Heart left ventricle (tissue), 16 donors: ENCODE measurements at regions of chr20 and their contacts with region 1.

Region 1: DNA sequence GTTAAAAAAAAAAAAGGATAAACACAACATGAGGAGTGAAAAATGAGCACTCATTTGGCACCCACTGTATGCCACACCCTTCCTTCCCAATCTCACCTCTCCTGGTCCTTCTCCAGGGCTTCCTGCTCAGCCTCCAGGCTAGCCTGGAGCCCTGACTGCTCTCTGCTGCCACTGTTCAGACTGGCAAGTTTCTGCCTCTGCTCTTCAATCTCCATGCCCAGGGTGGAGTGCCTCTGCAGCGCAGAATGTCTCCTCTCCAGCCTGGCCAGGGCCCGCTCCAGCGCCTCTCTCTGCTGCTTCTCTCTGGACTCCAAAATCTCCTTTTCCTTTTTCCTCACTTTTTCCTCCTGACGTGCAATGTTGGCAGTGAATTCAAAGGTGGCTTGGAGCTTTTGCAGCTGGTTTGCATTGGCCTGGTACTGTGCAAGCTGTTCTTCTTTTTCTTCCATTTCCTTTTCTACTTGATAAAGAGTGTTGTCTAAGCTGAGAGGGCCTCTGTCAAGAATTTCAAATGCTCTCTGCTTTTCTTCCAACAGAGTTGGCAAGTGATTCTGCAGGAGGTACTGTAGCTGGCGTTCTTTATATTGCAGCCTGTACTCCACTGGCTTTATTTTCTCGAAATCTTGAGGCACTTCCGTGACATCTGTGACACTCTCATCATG is 194.4 kb downstream of the KIF16B start:
- DNase-seq: no peak
- ATAC-seq: no peak
- H3K4me3 ChIP-seq: no peak overlapping the region
- H3K27ac ChIP-seq: no peak overlapping the region
- H3K4me1 ChIP-seq: no peaks in the 10 kb centered on the region
- H3K27me3 ChIP-seq: no peaks in the 10 kb centered on the region
- CTCF ChIP-seq: no peak
- POLR2A ChIP-seq: no peak

Region 2: DNA sequence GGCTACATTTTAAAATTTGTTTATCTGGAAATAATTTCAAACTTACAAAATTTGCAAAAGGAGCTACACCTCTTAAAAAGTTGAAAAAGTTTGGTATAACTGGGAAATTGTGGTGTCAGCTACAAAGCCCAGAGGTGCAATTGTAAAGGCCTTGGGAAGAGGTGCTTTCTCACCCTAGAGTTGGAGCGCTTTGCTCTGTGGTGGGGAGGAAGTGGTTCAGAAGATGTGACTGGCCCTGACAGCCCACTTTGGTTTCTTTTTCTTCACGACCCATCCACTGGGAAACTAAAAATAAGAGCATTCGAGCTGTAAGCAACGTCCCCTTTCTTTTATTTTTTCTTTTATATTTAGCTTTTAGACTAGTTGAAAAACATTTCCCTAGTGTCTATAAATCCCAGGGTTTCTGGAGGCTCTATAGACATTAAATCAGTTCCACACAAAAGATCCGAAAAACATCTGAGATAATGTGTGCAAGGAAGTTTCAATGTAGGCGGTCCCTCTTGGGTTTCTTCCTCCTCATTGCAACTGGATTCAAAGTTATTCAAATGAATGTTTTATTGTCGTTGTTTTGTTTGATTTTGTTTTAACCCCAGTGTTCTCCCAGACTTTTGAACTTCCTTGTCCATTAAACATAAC is 203.4 kb before region 1 on chr20:
- intact Hi-C with region 1: loop called in 1 of 10 experiments (anchors 10 kb)
- DNase-seq: no peak
- ATAC-seq: no peak
- H3K4me3 ChIP-seq: no peak overlapping the region
- H3K27ac ChIP-seq: no peak overlapping the region
- H3K4me1 ChIP-seq: no peaks in the 10 kb centered on the region
- H3K27me3 ChIP-seq: peaks cover 0 to 6% (median 0%) of the 10 kb centered on the region in 9 donors
- CTCF ChIP-seq: no peak
- POLR2A ChIP-seq: no peak

Region 3: GRCh38 chr20:16363506-16364319 is 15.1 kb before region 1 on chr20:
- intact Hi-C with region 1: no loop called
- DNase-seq: no peak
- ATAC-seq: no peak
- H3K4me3 ChIP-seq: no peak overlapping the region
- H3K27ac ChIP-seq: no peak overlapping the region
- H3K4me1 ChIP-seq: peaks cover 0 to 13% (median 0%) of the 10 kb centered on the region in 12 donors
- H3K27me3 ChIP-seq: no peaks in the 10 kb centered on the region
- CTCF ChIP-seq: no peak
- POLR2A ChIP-seq: no peak

Region 4: GRCh38 chr20:16485401-16485800 is 106.6 kb after region 1 on chr20:
- intact Hi-C with region 1: no loop called
- DNase-seq: no peak
- ATAC-seq: no peak
- H3K4me3 ChIP-seq: no peak overlapping the region
- H3K27ac ChIP-seq: no peak overlapping the region
- H3K4me1 ChIP-seq: no peaks in the 10 kb centered on the region
- H3K27me3 ChIP-seq: no peaks in the 10 kb centered on the region
- CTCF ChIP-seq: no peak
- POLR2A ChIP-seq: no peak

Region 5: GRCh38 chr20:16661756-16662155 is 282.9 kb after region 1 on chr20:
- intact Hi-C with region 1: no loop called
- DNase-seq: peak in 1 of 5 donors; percentile 23
- ATAC-seq: peak in 2 of 4 donors; percentile 39 to 42
- H3K4me3 ChIP-seq: no peak overlapping the region
- H3K27ac ChIP-seq: no peak overlapping the region
- H3K4me1 ChIP-seq: peaks cover 0 to 5% (median 0%) of the 10 kb centered on the region in 12 donors
- H3K27me3 ChIP-seq: peaks cover 0 to 6% (median 0%) of the 10 kb centered on the region in 9 donors
- CTCF ChIP-seq: no peak
- POLR2A ChIP-seq: no peak